ENCODE measurements at regions of chr2 and their contacts with region 1.

Region 1: DNA sequence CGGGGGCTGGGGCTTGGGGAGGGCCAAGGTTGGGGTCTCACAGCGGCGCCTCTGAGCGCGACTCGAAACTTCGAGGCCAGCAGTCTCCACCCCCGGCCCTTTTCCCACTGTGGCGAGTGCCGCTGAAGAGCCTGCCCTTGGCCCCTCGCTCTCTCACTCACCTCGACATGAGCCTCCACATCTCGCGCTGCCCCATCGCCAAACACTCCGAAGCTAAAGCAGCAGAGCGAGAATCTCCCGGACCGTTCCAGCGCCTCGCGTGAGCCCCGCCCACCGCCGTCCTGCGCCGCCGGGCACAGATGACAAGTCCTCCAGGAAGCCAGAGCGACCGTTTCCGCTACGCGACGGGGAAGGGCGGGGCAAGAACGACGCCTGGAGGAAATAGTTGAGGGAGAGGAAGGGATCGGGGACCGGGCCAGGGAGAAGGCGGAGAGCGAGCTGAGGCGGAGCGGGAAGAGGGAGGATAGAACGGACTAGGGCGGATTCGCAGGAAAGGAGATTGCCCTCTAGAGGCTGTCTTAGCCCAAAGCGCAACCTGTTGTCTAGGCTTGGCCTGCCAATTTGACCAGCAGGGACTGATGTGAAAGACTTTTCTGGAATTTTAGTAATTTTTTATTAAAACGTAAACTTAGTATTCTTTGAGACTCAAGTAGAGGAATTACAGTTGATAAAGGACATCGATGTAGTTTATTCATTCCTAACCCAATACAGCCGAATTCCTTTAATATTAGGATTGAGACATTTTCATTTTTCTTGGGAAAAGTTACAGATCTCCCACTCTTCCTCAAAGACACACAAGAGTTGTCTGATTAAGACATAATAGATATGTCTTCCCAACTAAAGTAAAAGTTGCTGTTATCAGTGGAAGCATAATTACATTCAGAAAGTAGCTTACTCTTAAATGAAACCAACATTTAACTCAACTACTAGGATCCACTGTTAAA is at the start of gene HIBCH:
- DNase-seq: peak; percentile 89
- ATAC-seq: peak; percentile 96
- H3K4me3 Mint-ChIP-seq: peak within 1 kb of the TSS; percentile 91
- H3K27ac Mint-ChIP-seq: peak within 1 kb of the TSS; percentile 93
- H3K4me1 Mint-ChIP-seq: peaks cover 39% of the 10 kb centered on the region
- H3K27me3 Mint-ChIP-seq: peaks cover 2% of the 10 kb centered on the region
- total RNA-seq, gene HIBCH: 13.5 to 13.7 TPM

Region 2: DNA sequence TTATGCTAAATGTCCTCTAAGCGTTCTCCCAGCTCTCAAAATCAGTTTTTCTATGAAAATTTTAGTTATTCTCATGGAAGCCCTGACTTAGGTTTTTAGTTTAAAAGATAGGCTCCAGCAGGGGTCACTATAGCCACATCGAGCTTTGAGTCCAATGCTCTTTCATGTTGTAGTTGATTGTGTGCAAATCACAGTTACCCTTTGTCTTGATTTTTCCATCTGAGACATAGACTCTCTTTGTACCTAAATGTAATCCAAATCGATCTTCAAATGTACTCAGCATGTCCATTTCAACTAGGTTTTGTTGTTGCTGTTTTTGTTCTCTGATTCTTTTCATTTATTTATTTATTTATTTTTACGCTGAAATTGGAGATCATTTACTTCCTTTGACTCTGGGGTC is 230.9 kb before region 1 on chr2:
- CTCF ChIA-PET with region 1: interaction called, 12 read pairs
- POLR2A ChIA-PET with region 1: no interaction called
- DNase-seq: peak; percentile 66
- ATAC-seq: peak; percentile 47
- H3K4me3 Mint-ChIP-seq: no peak overlapping the region
- H3K27ac Mint-ChIP-seq: no peak overlapping the region
- H3K4me1 Mint-ChIP-seq: no peaks in the 10 kb centered on the region
- H3K27me3 Mint-ChIP-seq: no peaks in the 10 kb centered on the region

Region 3: DNA sequence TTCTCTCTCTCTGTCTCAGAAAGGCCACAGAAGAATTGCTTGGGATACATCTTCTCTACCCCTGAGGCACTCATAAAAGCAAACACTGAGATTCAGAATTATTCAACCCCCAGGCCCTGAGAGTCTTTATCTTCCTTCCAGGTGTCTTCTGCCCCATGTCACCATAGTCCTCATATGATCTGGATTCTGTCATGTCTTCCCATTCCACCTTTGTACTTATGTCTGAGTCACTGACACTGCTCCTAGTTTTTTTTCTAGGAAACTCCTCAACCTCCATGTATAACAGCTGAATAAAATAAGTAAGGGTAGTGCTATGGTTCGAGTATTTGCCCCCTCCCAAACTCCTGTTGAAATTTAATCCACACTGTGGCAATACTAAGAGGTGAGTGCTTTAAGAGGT is 11.8 kb before region 1 on chr2:
- CTCF ChIA-PET with region 1: interaction called, 15 read pairs
- POLR2A ChIA-PET with region 1: no interaction called
- DNase-seq: no peak
- ATAC-seq: no peak
- H3K4me3 Mint-ChIP-seq: no peak overlapping the region
- H3K27ac Mint-ChIP-seq: no peak overlapping the region
- H3K4me1 Mint-ChIP-seq: no peaks in the 10 kb centered on the region
- H3K27me3 Mint-ChIP-seq: no peaks in the 10 kb centered on the region

Region 4: GRCh38 chr2:190343500-190344275 is 23.9 kb after region 1 on chr2 and contains the start of gene INPP1:
- CTCF ChIA-PET with region 1: interaction called, 29 read pairs
- POLR2A ChIA-PET with region 1: no interaction called
- DNase-seq: peak; percentile 54
- ATAC-seq: peak; percentile 77
- H3K4me3 Mint-ChIP-seq: peak within 1 kb of the TSS; percentile 77
- H3K27ac Mint-ChIP-seq: peak within 1 kb of the TSS; percentile 72
- H3K4me1 Mint-ChIP-seq: peaks cover 20% of the 10 kb centered on the region
- H3K27me3 Mint-ChIP-seq: peaks cover 17% of the 10 kb centered on the region
- total RNA-seq, gene INPP1: 5.6 to 6.9 TPM

Region 5: DNA sequence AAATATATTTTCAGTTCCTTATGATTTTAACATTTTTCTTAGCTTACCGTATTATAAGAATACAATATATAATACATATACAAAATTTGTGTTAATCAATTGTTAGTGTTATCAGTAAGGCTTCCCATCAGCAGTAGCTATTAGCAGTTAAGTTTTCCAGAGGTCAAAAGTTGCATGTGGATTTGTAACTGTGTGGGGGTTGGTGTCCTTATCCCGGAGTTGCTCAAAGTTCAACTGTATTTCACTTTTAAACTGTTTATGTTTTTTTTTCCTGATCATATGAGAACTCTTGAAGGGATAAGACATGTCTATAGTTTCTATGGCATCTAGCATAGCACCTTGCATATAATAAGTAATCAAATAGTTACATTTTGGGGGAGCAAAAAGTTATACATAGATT is 76.4 kb after region 1 on chr2:
- CTCF ChIA-PET with region 1: no interaction called
- POLR2A ChIA-PET with region 1: no interaction called
- DNase-seq: no peak
- ATAC-seq: no peak
- H3K4me3 Mint-ChIP-seq: no peak overlapping the region
- H3K27ac Mint-ChIP-seq: no peak overlapping the region
- H3K4me1 Mint-ChIP-seq: no peaks in the 10 kb centered on the region
- H3K27me3 Mint-ChIP-seq: peaks cover 26% of the 10 kb centered on the region

Measured in activated CD8-positive, alpha-beta T cell treated with anti-CD3 and anti-CD28 coated beads, Interleukin-2, amount 10 ng/mL, durations not matched to agents 7 days and 5 days (primary cell).